Heart left ventricle (tissue), 16 donors: ENCODE measurements at regions of chr1 and their contacts with region 1.

Region 1: DNA sequence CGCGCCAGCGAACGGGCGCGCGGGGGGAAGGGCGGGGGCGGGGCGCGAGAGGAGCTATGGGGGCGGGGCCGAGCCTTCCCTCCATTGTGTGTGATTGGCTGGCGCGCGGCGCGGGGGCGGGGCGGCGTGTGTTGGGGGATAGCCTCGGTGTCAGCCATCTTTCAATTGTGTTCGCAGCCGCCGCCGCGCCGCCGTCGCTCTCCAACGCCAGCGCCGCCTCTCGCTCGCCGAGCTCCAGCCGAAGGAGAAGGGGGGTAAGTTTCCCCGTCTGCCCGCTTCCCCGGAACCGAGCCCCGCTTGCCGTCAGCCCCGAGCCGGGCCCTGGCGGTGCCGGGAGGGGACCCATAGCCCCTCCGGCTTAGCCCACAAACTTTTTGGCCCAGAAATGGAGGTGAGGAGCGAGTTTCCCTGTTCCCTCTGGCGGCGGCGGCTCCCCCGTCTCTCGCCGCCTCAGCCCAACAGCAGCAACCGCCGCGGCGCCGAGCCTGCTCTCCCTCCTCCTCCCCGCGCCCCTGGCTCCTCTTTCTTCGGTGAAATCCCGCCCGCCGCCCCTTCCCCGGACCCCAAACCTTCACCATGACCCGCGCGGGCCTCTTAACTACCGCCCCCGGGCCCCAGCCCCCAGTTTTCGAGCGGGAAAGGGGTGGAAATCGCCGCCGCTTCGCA is at the start of gene H3-3A:
- DNase-seq: peak; percentile 99 to 100 (median 99)
- ATAC-seq: peak; percentile 92 to 95 (median 93)
- H3K4me3 ChIP-seq: peak within 1 kb of the TSS; percentile 66 to 93 (median 88)
- H3K27ac ChIP-seq: peak within 1 kb of the TSS; percentile 95 to 100 (median 99)
- H3K4me1 ChIP-seq: peaks cover 6 to 49% (median 42%) of the 10 kb centered on the region in 12 donors
- H3K27me3 ChIP-seq: no peaks in the 10 kb centered on the region
- CTCF ChIP-seq: peak in 4 of 12 donors; percentile 8 to 31 (median 18)
- POLR2A ChIP-seq: peak; percentile 85 to 99
- total RNA-seq, gene H3-3A: 241 to 386 (median 298) TPM

Region 2: DNA sequence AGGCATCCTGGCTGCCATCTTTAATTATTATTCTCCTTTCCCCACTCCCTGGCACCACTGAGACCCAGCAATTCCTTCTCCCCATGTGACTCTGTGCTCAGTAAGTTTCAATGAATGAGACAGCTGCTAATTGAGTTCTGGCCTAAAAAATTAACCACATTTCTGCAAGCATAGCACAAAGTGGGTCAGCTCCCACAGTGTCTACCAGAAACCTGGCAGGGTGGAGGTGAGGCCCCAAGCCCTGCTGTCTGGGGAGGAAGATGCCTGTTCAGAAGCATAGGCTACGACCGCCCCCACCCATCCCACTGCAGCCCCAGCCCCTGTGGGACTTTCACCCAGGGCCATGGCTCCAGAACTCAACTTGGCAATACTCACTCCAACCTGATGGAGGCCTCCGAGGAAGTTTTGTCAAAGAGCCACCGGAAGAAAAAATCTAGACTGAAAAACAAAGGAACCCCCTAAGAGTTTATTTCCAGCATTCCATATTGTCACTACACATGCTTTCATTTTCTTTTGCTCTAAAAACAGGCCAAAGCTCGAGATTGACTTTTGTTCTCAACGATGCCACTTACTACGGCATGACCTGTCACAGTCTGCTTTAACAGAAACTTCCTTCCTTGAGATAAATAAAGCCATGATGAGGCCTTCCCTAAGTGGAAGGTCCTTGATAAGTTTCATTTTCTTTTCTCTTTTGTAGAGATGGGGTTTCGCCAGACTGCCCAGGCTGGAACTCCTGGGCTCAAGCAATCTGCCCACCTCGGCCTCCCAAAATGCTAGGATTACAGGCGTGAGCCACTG is 207.0 kb before region 1 on chr1:
- intact Hi-C with region 1: no loop called
- DNase-seq: no peak
- ATAC-seq: no peak
- H3K4me3 ChIP-seq: no peak overlapping the region
- H3K27ac ChIP-seq: peak overlapping the region in 1 of 12 donors; percentile 63
- H3K4me1 ChIP-seq: peaks cover 0 to 16% (median 0%) of the 10 kb centered on the region in 12 donors
- H3K27me3 ChIP-seq: no peaks in the 10 kb centered on the region
- CTCF ChIP-seq: no peak
- POLR2A ChIP-seq: no peak

Region 3: DNA sequence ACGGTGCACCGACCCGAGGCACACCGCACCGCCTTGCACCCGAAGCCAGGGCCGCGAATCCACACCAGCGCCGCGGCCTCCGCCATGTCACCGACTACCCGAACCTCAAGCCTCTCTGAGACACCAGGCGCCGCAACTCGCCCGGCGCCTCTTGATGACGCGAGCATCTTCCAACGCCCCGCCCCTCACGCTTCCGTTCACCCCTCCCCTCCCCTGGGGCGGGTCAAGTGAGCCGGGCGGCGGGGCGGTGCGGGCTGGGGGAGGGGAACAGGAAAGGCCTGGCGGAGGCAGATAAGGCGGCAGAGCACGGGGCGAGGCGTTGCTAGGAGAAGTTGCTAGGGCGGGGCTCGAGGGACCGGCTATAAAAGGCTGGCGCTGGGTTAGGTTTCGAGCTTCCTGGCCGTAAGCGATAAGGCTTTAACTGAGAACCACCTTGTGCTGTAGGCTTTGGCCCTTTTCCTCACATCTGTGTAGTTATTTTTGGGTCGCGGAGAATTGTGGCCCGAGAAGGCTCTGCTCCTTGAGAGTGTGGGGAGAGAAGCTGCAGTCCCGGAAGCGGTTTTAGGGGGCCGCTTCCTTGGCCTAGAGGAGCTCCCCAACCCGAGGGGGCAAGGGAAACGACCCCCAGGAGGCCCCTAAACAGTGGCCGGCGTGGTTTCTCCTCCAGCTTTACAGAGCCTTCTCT is 63.3 kb before region 1 on chr1 and contains the start of gene SDE2:
- intact Hi-C with region 1: loop called in 9 of 10 experiments (anchors 1 to 2 kb)
- DNase-seq: peak; percentile 100
- ATAC-seq: peak; percentile 96 to 98 (median 97)
- H3K4me3 ChIP-seq: peak within 1 kb of the TSS; percentile 77 to 94 (median 86)
- H3K27ac ChIP-seq: peak within 1 kb of the TSS; percentile 84 to 99 (median 96)
- H3K4me1 ChIP-seq: peaks cover 4 to 70% (median 45%) of the 10 kb centered on the region in 12 donors
- H3K27me3 ChIP-seq: no peaks in the 10 kb centered on the region
- CTCF ChIP-seq: peak in 2 of 12 donors; percentile 17 to 40
- POLR2A ChIP-seq: peak; percentile 24 to 95
- total RNA-seq, gene SDE2: 9.3 to 16.4 (median 12.6) TPM

Region 4: GRCh38 chr1:226109829-226110248 is 47.1 kb after region 1 on chr1:
- intact Hi-C with region 1: loop called in 3 of 10 experiments (anchors 1 to 2 kb)
- DNase-seq: peak; percentile 93 to 95 (median 93)
- ATAC-seq: peak; percentile 86 to 89 (median 86)
- H3K4me3 ChIP-seq: peak overlapping the region; percentile 60 to 87 (median 69)
- H3K27ac ChIP-seq: peak overlapping the region; percentile 94 to 100 (median 100)
- H3K4me1 ChIP-seq: peaks cover 0 to 38% (median 33%) of the 10 kb centered on the region in 12 donors
- H3K27me3 ChIP-seq: no peaks in the 10 kb centered on the region
- CTCF ChIP-seq: peak in 7 of 12 donors; percentile 9 to 36 (median 22)
- POLR2A ChIP-seq: no peak

Region 5: GRCh38 chr1:226186124-226187018 is 123.7 kb after region 1 on chr1 and contains the start of gene ACBD3:
- intact Hi-C with region 1: loop called in 5 of 10 experiments (anchors 5 to 10 kb)
- DNase-seq: peak; percentile 90 to 93 (median 91)
- ATAC-seq: peak; percentile 93 to 98 (median 98)
- H3K4me3 ChIP-seq: peak within 1 kb of the TSS; percentile 62 to 98 (median 80)
- H3K27ac ChIP-seq: peak within 1 kb of the TSS; percentile 82 to 96 (median 92)
- H3K4me1 ChIP-seq: peaks cover 5 to 47% (median 31%) of the 10 kb centered on the region in 12 donors
- H3K27me3 ChIP-seq: no peaks in the 10 kb centered on the region
- CTCF ChIP-seq: peak in 1 of 12 donors; percentile 24
- POLR2A ChIP-seq: peak; percentile 40 to 81
- total RNA-seq, gene ACBD3: 23.6 to 39.1 (median 28.4) TPM

Region 6: GRCh38 chr1:226195144-226195543 is 132.5 kb after region 1 on chr1:
- intact Hi-C with region 1: loop called in 3 of 10 experiments (anchors 5 to 10 kb)
- DNase-seq: no peak
- ATAC-seq: no peak
- H3K4me3 ChIP-seq: no peak overlapping the region
- H3K27ac ChIP-seq: no peak overlapping the region
- H3K4me1 ChIP-seq: peaks cover 0 to 10% (median 0%) of the 10 kb centered on the region in 12 donors
- H3K27me3 ChIP-seq: no peaks in the 10 kb centered on the region
- CTCF ChIP-seq: no peak
- POLR2A ChIP-seq: no peak